Psoas muscle (tissue), 8 donors: ENCODE measurements at regions of chr1 and their contacts with region 1.

Region 1: GRCh38 chr1:182446033-182446669 is 3.8 kb upstream of the RGSL1 start:
- DNase-seq: no peak
- ATAC-seq: peak in 3 of 4 donors; percentile 62 to 86 (median 82)
- H3K4me3 ChIP-seq: no peak overlapping the region
- H3K27ac ChIP-seq: no peak overlapping the region
- H3K4me1 ChIP-seq: no peaks in the 10 kb centered on the region
- H3K27me3 ChIP-seq: no peaks in the 10 kb centered on the region
- CTCF ChIP-seq: peak; percentile 66

Region 2: GRCh38 chr1:182604169-182605164 is 158.3 kb after region 1 on chr1 and contains the start of gene RGS16:
- intact Hi-C with region 1: loop called in 1 of 2 experiments (anchors 5 kb)
- DNase-seq: peak; percentile 96
- ATAC-seq: peak; percentile 95 to 97 (median 95)
- H3K4me3 ChIP-seq: peak within 1 kb of the TSS; percentile 69
- H3K27ac ChIP-seq: peak within 1 kb of the TSS; percentile 74
- H3K4me1 ChIP-seq: peaks cover 31% of the 10 kb centered on the region
- H3K27me3 ChIP-seq: no peaks in the 10 kb centered on the region
- CTCF ChIP-seq: no peak
- total RNA-seq, gene RGS16: 1.2 to 17.5 (median 6.9) TPM

Region 3: GRCh38 chr1:182789138-182790076 is 343.3 kb after region 1 on chr1 and contains the start of gene NPL:
- intact Hi-C with region 1: loop called (anchors 5 to 10 kb)
- DNase-seq: peak; percentile 86 to 92
- ATAC-seq: peak; percentile 97 to 98 (median 98)
- H3K4me3 ChIP-seq: peak within 1 kb of the TSS; percentile 80
- H3K27ac ChIP-seq: peak within 1 kb of the TSS; percentile 83
- H3K4me1 ChIP-seq: peaks cover 5% of the 10 kb centered on the region
- H3K27me3 ChIP-seq: no peaks in the 10 kb centered on the region
- CTCF ChIP-seq: no peak
- total RNA-seq, gene NPL: 2.9 to 6.7 (median 5.5) TPM